ENCODE measurements at regions of chr9 and their contacts with region 1.

Region 1: GRCh38 chr9:93468763-93469456 is 15.5 kb upstream of the FAM120AOS start:
- DNase-seq: peak; percentile 36
- H3K4me3 ChIP-seq: no peak overlapping the region
- H3K27ac ChIP-seq: no peak overlapping the region
- H3K4me1 ChIP-seq: peaks cover 35% of the 10 kb centered on the region
- H3K27me3 ChIP-seq: no peaks in the 10 kb centered on the region
- CTCF ChIP-seq: no peak
- POLR2A ChIP-seq: no peak

Region 2: DNA sequence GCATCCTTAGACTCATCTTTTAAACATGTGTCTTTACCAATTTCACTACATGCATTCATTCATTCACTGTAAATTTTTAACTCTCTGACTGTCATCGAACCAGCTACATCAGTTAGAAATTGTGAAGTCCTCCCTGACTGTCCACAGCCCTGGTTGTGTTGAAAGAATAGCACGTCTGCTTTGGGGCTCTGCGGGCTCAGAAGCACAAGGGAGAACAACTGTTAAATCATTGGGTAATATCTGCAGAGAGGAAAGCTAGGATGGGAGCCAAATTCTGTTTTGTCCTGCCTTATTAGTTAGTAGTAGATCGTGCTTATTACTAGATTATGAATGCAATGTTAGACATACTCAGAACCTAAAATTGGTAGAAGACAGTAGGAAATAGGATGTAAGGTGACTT is 10.8 kb after region 1 on chr9:
- CTCF ChIA-PET with region 1: interaction called, 11 read pairs
- POLR2A ChIA-PET with region 1: no interaction called
- dilution Hi-C with region 1: no loop called
- intact Hi-C with region 1: no loop called
- DNase-seq: no peak
- H3K4me3 ChIP-seq: no peak overlapping the region
- H3K27ac ChIP-seq: no peak overlapping the region
- H3K4me1 ChIP-seq: peaks cover 2% of the 10 kb centered on the region
- H3K27me3 ChIP-seq: no peaks in the 10 kb centered on the region
- CTCF ChIP-seq: no peak
- POLR2A ChIP-seq: no peak